PC-3 (cell line): ENCODE measurements at regions of chr16 and their contacts with region 1.

Region 1: GRCh38 chr16:66275775-66276428 is 90.6 kb upstream of the CDH5 start:
- DNase-seq: peak; percentile 80
- ATAC-seq: no peak; the same call in 1 of the 2 replicates
- H3K4me3 ChIP-seq: no peak overlapping the region
- H3K27ac ChIP-seq: no peak overlapping the region
- H3K4me1 ChIP-seq: peaks cover 47% of the 10 kb centered on the region
- H3K27me3 ChIP-seq: no peaks in the 10 kb centered on the region
- CTCF ChIP-seq: peak; percentile 63

Region 2: GRCh38 chr16:66250686-66251431 is 25.0 kb before region 1 on chr16:
- CTCF ChIA-PET with region 1: no interaction called
- POLR2A ChIA-PET with region 1: no interaction called
- intact Hi-C with region 1: no loop called
- DNase-seq: peak; percentile 14
- ATAC-seq: peak; percentile 60
- H3K4me3 ChIP-seq: no peak overlapping the region
- H3K27ac ChIP-seq: no peak overlapping the region
- H3K4me1 ChIP-seq: peaks cover 12% of the 10 kb centered on the region; the same call in 1 of the 2 replicates
- H3K27me3 ChIP-seq: no peaks in the 10 kb centered on the region
- CTCF ChIP-seq: no peak

Region 3: GRCh38 chr16:66315210-66315825 is 39.4 kb after region 1 on chr16:
- CTCF ChIA-PET with region 1: no interaction called
- POLR2A ChIA-PET with region 1: no interaction called
- intact Hi-C with region 1: loop called (anchors 1 kb)
- DNase-seq: peak; percentile 73
- ATAC-seq: peak; percentile 94
- H3K4me3 ChIP-seq: no peak overlapping the region
- H3K27ac ChIP-seq: no peak overlapping the region
- H3K4me1 ChIP-seq: peaks cover 5% of the 10 kb centered on the region; the same call in 1 of the 2 replicates
- H3K27me3 ChIP-seq: no peaks in the 10 kb centered on the region
- CTCF ChIP-seq: peak; percentile 89

Region 4: DNA sequence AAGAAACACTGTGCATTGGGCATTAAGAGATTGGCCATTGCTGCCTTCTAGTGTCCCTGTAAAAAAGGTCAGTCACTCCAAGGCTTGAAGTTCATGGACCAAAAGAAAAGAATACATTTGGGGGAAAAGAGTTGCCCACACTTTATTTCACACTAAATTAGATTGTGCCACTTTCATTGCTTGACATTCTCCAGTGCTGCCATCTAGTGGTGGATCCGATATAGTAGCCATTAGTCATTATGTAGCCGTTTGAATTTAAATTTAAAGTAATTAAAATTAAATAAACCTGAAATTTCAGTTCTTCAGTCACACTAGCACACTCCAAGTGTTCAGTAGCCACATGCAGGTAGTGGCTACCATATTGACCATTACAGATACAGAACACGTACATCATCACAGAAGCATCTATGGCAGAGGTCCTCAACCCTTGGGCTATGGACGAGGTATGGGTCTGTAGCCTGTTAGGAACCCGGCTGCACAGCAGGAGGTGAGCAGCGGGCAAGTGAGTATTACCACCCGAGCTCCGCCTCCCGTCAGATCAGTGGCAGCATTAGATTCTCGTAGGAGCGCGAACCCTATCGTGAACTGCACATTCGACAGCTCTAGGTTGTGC is 68.7 kb after region 1 on chr16:
- CTCF ChIA-PET with region 1: interaction called, 3 read pairs
- POLR2A ChIA-PET with region 1: no interaction called
- intact Hi-C with region 1: loop called (anchors 2 kb)
- DNase-seq: peak; percentile 55
- ATAC-seq: peak; percentile 22; the same call in 1 of the 2 replicates
- H3K4me3 ChIP-seq: no peak overlapping the region
- H3K27ac ChIP-seq: no peak overlapping the region
- H3K4me1 ChIP-seq: no peaks in the 10 kb centered on the region
- H3K27me3 ChIP-seq: no peaks in the 10 kb centered on the region
- CTCF ChIP-seq: peak; percentile 71